ENCODE measurements at regions of chr7 and their contacts with region 1.

Region 1: GRCh38 chr7:142496545-142497041 is 238.7 kb upstream of the PRSS58 start:
- DNase-seq: peak; percentile 33
- H3K4me3 Mint-ChIP-seq: peak overlapping the region; percentile 39
- H3K27ac Mint-ChIP-seq: no peak overlapping the region
- H3K4me1 Mint-ChIP-seq: peaks cover 55% of the 10 kb centered on the region
- H3K27me3 Mint-ChIP-seq: peaks cover 7% of the 10 kb centered on the region

Region 2: GRCh38 chr7:142459551-142459963 is 37.0 kb before region 1 on chr7:
- CTCF ChIA-PET with region 1: interaction called, 22 read pairs
- DNase-seq: peak; percentile 52
- H3K4me3 Mint-ChIP-seq: no peak overlapping the region
- H3K27ac Mint-ChIP-seq: no peak overlapping the region
- H3K4me1 Mint-ChIP-seq: peaks cover 66% of the 10 kb centered on the region
- H3K27me3 Mint-ChIP-seq: peaks cover 9% of the 10 kb centered on the region

Region 3: DNA sequence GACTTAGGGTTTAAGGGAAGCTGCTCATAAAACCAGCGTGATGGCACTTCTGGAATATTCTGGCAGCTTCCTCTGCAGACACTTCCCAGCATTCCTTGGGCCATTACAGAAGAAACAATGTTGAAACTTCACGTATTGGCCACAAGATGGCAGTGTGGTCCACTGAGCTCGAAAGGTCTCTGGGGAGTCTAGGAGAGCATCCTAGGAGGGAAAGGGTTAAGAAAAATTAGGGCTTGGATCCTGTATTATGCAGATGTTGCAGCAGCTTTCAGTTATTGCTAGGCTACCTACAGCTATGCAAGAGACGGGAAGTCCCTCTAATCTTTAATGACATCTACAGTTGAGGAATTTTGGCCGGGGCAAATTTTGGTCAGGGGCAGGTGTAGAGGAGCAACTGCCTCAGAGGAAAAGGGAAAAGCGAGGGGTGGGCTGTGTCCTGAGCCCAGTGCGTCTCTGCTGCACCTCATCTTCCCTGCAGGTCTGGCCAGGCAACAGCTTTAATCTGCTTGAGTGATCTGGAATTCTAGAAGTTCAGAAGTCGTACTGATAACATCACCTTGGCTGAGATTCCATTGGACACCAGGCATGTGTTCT is 18.0 kb before region 1 on chr7:
- CTCF ChIA-PET with region 1: interaction called, 14 read pairs
- DNase-seq: peak; percentile 44
- H3K4me3 Mint-ChIP-seq: peak overlapping the region; percentile 28
- H3K27ac Mint-ChIP-seq: peak overlapping the region; percentile 17
- H3K4me1 Mint-ChIP-seq: peaks cover 75% of the 10 kb centered on the region
- H3K27me3 Mint-ChIP-seq: peaks cover 6% of the 10 kb centered on the region

Region 4: DNA sequence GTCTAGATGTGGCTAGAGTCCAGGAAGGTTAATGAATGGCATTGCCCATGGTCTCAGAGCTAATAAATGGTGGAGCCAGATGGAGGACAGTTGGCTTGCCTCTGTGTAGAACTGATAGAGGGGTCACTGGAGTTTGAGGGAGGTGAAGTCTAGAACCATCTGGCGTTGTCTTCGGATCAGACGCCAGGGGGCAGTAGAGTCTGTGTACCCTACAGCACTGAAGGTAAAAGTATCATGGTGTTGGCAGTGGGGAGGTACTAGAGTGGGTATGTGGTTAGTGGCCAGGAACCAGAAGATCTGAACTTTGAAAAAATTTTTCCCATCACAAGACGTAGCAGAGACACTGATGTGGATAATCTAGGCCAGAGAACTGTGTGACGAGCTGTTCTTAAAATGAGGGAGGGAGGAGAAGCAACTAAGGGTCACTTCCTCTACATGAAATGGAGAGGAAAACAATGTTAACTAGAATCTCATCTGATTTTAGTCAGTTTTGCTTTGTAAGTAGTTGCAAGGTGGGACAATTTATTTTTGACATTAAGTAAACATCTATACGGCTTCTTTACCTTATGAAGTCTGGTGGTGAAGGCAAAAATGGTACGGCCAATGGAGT is 10.9 kb before region 1 on chr7:
- CTCF ChIA-PET with region 1: interaction called, 20 read pairs
- DNase-seq: peak; percentile 61
- H3K4me3 Mint-ChIP-seq: no peak overlapping the region
- H3K27ac Mint-ChIP-seq: peak overlapping the region; percentile 38
- H3K4me1 Mint-ChIP-seq: peaks cover 43% of the 10 kb centered on the region
- H3K27me3 Mint-ChIP-seq: peaks cover 17% of the 10 kb centered on the region

Region 5: GRCh38 chr7:142508258-142508689 is 11.7 kb after region 1 on chr7:
- CTCF ChIA-PET with region 1: interaction called, 21 read pairs
- DNase-seq: peak; percentile 43
- H3K4me3 Mint-ChIP-seq: no peak overlapping the region
- H3K27ac Mint-ChIP-seq: peak overlapping the region; percentile 77
- H3K4me1 Mint-ChIP-seq: peaks cover 52% of the 10 kb centered on the region
- H3K27me3 Mint-ChIP-seq: peaks cover 27% of the 10 kb centered on the region

Region 6: DNA sequence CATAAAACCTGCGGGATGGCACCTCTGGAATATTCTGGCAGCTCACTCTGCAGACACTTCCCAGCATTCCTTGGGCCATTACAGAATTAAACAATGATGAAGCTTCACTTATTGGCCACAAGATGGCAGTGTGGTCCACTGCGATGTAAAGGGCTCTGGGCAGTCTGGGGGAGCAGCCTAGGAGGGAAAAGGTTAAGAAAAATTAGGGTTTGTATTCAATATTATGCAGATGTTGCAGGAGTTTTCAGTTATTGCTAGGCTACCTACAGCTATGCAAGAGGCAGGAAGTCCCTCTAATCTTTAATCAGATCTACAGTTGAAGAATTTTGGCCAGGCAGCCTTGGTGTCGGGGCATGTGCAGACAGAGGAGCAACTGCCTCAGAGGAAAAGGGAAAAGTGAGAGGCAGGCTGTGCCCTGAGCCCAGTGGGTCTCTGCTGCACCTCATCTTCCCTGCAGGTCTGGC is 19.5 kb after region 1 on chr7:
- CTCF ChIA-PET with region 1: interaction called, 56 read pairs
- DNase-seq: peak; percentile 50
- H3K4me3 Mint-ChIP-seq: no peak overlapping the region
- H3K27ac Mint-ChIP-seq: no peak overlapping the region
- H3K4me1 Mint-ChIP-seq: peaks cover 46% of the 10 kb centered on the region
- H3K27me3 Mint-ChIP-seq: peaks cover 6% of the 10 kb centered on the region